ENCODE measurements at regions of chr1 and their contacts with region 1.

Region 1: DNA sequence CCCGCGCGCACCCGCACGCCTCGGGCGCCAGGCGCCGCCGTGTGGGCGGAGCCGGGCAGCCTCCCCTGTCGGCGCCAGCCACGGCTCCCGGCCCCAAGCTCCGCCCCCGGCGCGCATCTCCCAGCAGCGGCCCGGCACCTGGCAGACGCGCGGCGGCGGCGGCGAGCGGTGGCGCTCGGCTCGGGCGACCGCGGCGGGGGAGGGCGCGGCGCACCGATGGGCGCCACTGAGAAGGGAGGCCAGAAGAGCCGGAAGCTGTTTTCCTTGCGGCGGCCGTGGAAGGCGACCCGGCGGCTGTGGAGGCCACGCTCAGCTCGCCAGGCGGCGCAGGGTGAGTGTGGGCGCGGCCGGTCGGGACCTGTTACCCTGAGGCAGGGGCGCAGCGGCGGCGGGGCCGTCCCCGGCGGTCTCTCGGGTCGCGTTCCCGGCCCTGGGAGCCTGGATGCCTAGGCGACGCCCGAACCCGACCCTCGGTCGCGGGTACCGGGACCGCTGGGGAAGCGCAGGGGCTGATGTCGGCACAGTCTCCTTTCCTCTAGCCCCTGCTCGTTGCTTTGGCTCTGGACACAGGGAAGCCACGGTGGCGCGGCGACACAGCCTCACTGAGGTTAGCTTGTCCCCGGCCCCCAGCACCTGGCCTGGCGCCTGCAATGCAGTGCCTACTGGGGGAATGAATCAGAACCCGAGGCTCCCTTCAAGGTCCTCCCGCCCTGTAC is 54.9 kb upstream of the DNAJC6 start:
- DNase-seq: peak; percentile 80
- H3K4me3 Mint-ChIP-seq: peak overlapping the region; percentile 85
- H3K27ac Mint-ChIP-seq: no peak overlapping the region
- H3K4me1 Mint-ChIP-seq: peaks cover 12% of the 10 kb centered on the region
- H3K27me3 Mint-ChIP-seq: peaks cover 39% of the 10 kb centered on the region

Region 2: GRCh38 chr1:65090403-65090802 is 164.1 kb before region 1 on chr1:
- intact Hi-C with region 1: no loop called
- DNase-seq: no peak
- H3K4me3 Mint-ChIP-seq: no peak overlapping the region
- H3K27ac Mint-ChIP-seq: no peak overlapping the region
- H3K4me1 Mint-ChIP-seq: no peaks in the 10 kb centered on the region
- H3K27me3 Mint-ChIP-seq: peaks cover 9% of the 10 kb centered on the region

Region 3: GRCh38 chr1:65148548-65149350 is 105.7 kb before region 1 on chr1:
- intact Hi-C with region 1: loop called (anchors 1 kb)
- DNase-seq: peak; percentile 43
- H3K4me3 Mint-ChIP-seq: peak overlapping the region; percentile 90
- H3K27ac Mint-ChIP-seq: peak overlapping the region; percentile 88
- H3K4me1 Mint-ChIP-seq: peaks cover 40% of the 10 kb centered on the region
- H3K27me3 Mint-ChIP-seq: peaks cover 14% of the 10 kb centered on the region

Region 4: DNA sequence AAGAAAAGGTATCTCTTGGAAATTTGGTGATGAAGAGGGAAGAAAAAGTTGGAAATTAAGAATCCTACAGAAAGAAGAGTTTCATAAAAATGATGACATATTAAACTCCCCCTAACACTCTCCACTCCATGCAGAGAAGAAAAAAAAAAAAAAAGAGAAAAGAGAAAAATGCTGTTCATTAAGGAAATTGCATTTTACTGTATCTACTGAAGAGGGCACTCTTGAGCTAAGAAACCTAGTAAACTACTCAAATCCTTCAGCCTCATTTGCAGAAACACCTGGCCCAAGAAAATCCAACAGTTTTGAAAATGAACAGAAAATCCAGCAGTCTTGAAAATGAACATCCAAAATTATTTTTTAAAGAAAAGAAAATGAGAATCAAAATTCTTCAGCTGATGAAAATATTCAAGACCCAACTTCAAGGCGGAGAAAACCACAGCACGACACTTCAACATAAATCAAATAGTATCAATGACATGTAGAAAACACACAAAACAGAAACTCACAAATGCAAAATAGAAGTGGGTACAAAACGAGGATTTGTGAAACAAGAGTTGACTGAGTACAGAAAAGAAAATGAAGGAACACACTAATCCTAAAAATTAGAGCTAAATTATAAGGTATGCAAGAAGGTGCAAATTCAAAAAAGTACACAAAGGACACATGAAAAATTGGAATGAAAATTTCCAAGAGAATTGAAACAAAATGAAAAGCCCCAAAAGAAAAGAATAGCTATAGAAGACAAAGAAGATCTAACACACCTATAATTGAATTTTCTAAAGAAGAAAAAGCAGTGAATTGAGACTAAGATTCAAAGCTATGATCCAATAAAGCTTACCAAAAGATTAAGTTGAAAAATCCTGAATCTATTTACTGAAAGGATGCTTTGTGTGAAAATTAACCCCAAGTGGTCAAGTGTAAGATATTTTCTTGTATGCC is 18.3 kb before region 1 on chr1:
- intact Hi-C with region 1: no loop called
- DNase-seq: no peak
- H3K4me3 Mint-ChIP-seq: no peak overlapping the region
- H3K27ac Mint-ChIP-seq: no peak overlapping the region
- H3K4me1 Mint-ChIP-seq: peaks cover 17% of the 10 kb centered on the region
- H3K27me3 Mint-ChIP-seq: peaks cover 17% of the 10 kb centered on the region